Activated naive CD4-positive, alpha-beta T cell treated with anti-CD3 and anti-CD28 coated beads, Interleukin-2, amount 10 ng/mL, durations not matched to agents 7 days and 5 days (primary cell): ENCODE measurements at regions of chr7 and their contacts with region 1.

Region 1: GRCh38 chr7:39453743-39454355 is 112.4 kb upstream of the YAE1 start:
- DNase-seq: peak; percentile 75
- H3K4me3 Mint-ChIP-seq: no peak overlapping the region
- H3K27ac Mint-ChIP-seq: no peak overlapping the region
- H3K4me1 Mint-ChIP-seq: no peaks in the 10 kb centered on the region
- H3K27me3 Mint-ChIP-seq: peaks cover 23% of the 10 kb centered on the region

Region 2: GRCh38 chr7:39217783-39218182 is 236.1 kb before region 1 on chr7:
- CTCF ChIA-PET with region 1: no interaction called
- DNase-seq: no peak
- H3K4me3 Mint-ChIP-seq: no peak overlapping the region
- H3K27ac Mint-ChIP-seq: no peak overlapping the region
- H3K4me1 Mint-ChIP-seq: no peaks in the 10 kb centered on the region
- H3K27me3 Mint-ChIP-seq: peaks cover 3% of the 10 kb centered on the region

Region 3: DNA sequence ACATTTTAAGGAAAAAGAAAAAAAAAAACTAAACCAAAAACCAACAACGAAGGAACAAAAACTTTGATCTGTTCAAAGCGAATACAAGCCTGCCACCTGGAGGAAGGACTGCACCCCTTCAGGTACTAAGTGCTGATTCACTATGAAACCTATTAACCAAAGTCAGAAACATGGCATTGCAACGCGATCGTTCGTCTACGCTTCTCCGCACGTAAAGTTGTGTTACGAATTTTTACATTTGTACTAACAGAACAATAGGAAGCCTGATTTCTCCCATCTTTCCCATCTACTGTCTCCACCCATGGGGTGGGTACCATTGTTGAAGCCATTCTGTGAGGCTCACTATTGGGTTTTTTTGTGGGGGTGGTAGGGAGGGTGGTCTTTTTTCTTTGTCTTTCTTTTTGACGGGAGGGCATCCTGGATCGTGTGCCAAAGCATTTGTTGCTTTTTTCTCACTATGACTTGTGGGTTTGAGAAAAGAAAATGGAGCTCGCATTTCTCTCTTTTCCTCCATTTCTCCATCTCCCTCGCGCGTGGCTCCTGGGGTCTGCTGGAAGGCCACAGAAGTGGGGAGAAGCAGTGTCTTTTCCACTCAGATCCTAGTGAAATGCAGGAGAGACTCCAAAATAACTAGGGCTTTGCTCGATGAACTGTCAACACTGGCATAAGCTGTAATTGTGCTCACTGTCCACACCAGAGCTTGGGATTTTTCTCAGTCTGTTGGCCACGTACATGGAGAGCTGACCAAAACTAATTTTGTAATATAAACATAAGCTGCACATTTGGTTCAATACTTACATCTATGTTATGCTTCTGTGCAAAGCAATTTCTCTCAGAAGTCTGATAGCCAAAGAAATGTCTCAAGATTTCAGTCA is 11.4 kb after region 1 on chr7:
- CTCF ChIA-PET with region 1: interaction called, 28 read pairs
- DNase-seq: peak; percentile 61
- H3K4me3 Mint-ChIP-seq: no peak overlapping the region
- H3K27ac Mint-ChIP-seq: no peak overlapping the region
- H3K4me1 Mint-ChIP-seq: peaks cover 9% of the 10 kb centered on the region
- H3K27me3 Mint-ChIP-seq: peaks cover 27% of the 10 kb centered on the region